CD4-positive, alpha-beta memory T cell (primary cell): ENCODE measurements at regions of chr1 and their contacts with region 1.

Region 1: GRCh38 chr1:113904674-113905434 is at the starts of genes AP4B1 and DCLRE1B:
- DNase-seq: peak; percentile 97 to 99 (median 98)
- H3K4me3 ChIP-seq: peak within 1 kb of the TSS; percentile 68 to 98
- H3K4me3 Mint-ChIP-seq: peak within 1 kb of the TSS; percentile 94 to 100 (median 99)
- H3K27ac ChIP-seq: peak within 1 kb of the TSS; percentile 96
- H3K27ac Mint-ChIP-seq: peak within 1 kb of the TSS; percentile 96 to 100 (median 100)
- H3K4me1 ChIP-seq: peaks cover 44% of the 10 kb centered on the region
- H3K4me1 Mint-ChIP-seq: peaks cover 36 to 74% (median 47%) of the 10 kb centered on the region in 4 donors
- H3K27me3 ChIP-seq: no peaks in the 10 kb centered on the region
- H3K27me3 Mint-ChIP-seq: no peaks in the 10 kb centered on the region
- total RNA-seq, gene AP4B1: 74.5 to 75.5 TPM
- total RNA-seq, gene DCLRE1B: 5.1 to 5.4 TPM

Region 2: DNA sequence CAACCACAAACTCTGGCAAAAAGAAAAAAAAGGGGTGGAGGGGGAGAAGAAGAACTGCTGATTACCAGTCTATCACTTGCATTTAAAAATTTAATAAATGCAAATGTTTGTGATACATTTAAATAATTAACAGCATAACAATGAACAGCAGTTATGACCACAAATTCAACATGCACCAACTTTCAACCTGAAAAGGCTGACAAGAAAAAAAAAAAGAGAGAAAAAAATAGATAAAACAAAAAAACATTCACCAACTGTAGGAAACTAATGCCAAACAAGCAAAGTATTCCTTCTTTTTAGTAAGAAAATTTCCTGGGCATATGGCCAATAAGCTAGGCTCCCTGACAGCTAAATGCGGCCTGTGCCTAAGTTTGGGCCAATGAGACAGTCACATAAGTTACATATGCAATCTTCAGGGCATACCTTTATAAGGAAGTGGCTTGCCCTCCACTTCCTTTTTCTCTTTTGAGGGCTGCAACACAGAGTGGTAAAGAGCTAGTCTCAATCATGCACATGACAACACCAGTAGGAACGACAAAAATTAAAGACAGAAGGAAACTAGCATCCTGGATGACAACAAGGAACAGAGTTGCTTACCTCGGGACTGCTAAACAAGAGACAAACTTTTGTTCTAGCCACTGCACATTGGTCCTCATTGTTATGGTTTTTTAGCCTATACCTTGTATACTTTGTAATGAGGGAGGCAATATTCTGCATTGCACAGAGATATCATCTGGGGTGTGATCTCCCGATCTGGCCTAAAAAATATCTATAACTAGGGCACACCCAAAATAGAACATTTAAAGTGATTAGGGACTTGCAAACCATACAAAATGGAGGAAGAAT is 121.4 kb before region 1 on chr1:
- CTCF ChIA-PET with region 1: interaction called, 3 read pairs
- POLR2A ChIA-PET with region 1: interaction called, 10 read pairs
- intact Hi-C with region 1: no loop called
- DNase-seq: peak; percentile 66 to 84 (median 73)
- H3K4me3 ChIP-seq: peak overlapping the region in 1 of 2 donors; percentile 14
- H3K4me3 Mint-ChIP-seq: peak overlapping the region in 7 of 8 donors; percentile 44 to 89 (median 72)
- H3K27ac ChIP-seq: peak overlapping the region; percentile 48
- H3K27ac Mint-ChIP-seq: peak overlapping the region in 2 of 7 donors; percentile 77 to 93
- H3K4me1 ChIP-seq: peaks cover 100% of the 10 kb centered on the region
- H3K4me1 Mint-ChIP-seq: peaks cover 30 to 47% (median 38%) of the 10 kb centered on the region in 4 donors
- H3K27me3 ChIP-seq: no peaks in the 10 kb centered on the region
- H3K27me3 Mint-ChIP-seq: no peaks in the 10 kb centered on the region

Region 3: DNA sequence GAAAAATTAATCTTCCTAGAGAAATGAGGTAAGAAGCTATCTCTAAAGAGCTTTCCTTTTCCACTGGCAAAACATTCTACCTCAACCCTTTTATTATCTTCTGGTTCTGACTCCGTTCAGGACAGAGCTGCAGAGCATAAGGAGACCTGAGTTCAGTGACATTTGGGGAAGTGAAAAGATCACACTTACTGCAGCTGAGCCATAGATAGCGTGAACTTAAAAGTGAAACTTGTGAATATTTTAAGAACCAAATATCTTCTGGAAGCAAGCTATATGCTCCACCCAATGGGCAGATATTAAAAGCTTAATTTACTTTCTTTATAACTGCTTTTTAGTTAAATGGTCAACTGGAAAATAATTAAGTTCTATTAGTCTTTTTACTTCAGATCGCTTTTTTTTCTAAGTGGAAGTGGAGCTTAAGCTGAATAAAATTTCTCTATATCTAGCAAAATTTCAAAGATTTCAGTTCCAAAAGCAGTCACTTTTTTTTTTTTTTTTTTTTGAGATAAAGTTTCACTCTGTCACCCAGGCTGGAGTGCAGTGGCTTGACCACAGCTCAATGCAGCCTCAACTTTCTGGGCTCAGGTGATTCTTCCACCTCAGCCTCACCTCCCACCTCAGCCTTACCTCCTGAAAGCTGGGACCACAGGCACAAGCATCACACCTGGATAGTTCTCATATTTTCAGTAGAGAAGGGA is 45.2 kb before region 1 on chr1:
- CTCF ChIA-PET with region 1: interaction called, 10 read pairs
- POLR2A ChIA-PET with region 1: interaction called, 16 read pairs
- intact Hi-C with region 1: no loop called
- DNase-seq: no peak
- H3K4me3 ChIP-seq: no peak overlapping the region
- H3K4me3 Mint-ChIP-seq: peak overlapping the region in 6 of 8 donors; percentile 25 to 66 (median 46)
- H3K27ac ChIP-seq: no peak overlapping the region
- H3K27ac Mint-ChIP-seq: peak overlapping the region in 6 of 7 donors; percentile 55 to 89 (median 86)
- H3K4me1 ChIP-seq: peaks cover 24% of the 10 kb centered on the region
- H3K4me1 Mint-ChIP-seq: peaks cover 23 to 39% (median 35%) of the 10 kb centered on the region in 4 donors
- H3K27me3 ChIP-seq: no peaks in the 10 kb centered on the region
- H3K27me3 Mint-ChIP-seq: no peaks in the 10 kb centered on the region

Region 4: DNA sequence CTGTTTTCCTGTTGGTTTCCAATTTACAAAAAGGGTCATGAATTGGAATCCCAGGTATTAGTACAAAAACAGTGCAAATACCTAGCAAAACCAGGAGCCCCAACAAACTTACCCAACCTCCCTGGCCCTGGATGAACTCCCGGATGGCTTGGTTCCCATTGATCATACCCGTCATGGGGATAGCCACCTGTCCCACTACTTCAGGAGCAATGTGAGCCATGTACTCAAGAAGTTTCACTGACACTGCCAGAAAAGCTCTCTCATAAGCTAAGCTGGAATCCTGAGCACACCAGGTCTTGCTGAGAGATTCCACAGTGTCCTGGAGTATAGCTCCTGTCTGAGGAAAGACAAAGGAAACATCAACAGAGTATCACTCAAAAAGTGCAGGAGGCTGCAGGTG is 23.2 kb before region 1 on chr1:
- CTCF ChIA-PET with region 1: interaction called, 18 read pairs
- POLR2A ChIA-PET with region 1: interaction called, 30 read pairs
- intact Hi-C with region 1: no loop called
- DNase-seq: no peak
- H3K4me3 ChIP-seq: no peak overlapping the region
- H3K4me3 Mint-ChIP-seq: no peak overlapping the region
- H3K27ac ChIP-seq: no peak overlapping the region
- H3K27ac Mint-ChIP-seq: peak overlapping the region in 5 of 7 donors; percentile 22 to 78 (median 66)
- H3K4me1 ChIP-seq: peaks cover 46% of the 10 kb centered on the region
- H3K4me1 Mint-ChIP-seq: peaks cover 36 to 55% (median 42%) of the 10 kb centered on the region in 4 donors
- H3K27me3 ChIP-seq: no peaks in the 10 kb centered on the region
- H3K27me3 Mint-ChIP-seq: no peaks in the 10 kb centered on the region

Region 5: GRCh38 chr1:113949007-113949406 is 44.2 kb after region 1 on chr1:
- CTCF ChIA-PET with region 1: interaction called, 10 read pairs
- POLR2A ChIA-PET with region 1: interaction called, 31 read pairs
- intact Hi-C with region 1: loop called (anchors 1 kb)
- DNase-seq: peak in 2 of 5 donors; percentile 27 to 41
- H3K4me3 ChIP-seq: no peak overlapping the region
- H3K4me3 Mint-ChIP-seq: peak overlapping the region in 4 of 8 donors; percentile 51 to 86 (median 72)
- H3K27ac ChIP-seq: peak overlapping the region; percentile 5
- H3K27ac Mint-ChIP-seq: peak overlapping the region; percentile 69 to 95 (median 91)
- H3K4me1 ChIP-seq: peaks cover 88% of the 10 kb centered on the region
- H3K4me1 Mint-ChIP-seq: peaks cover 47 to 93% (median 65%) of the 10 kb centered on the region in 4 donors
- H3K27me3 ChIP-seq: no peaks in the 10 kb centered on the region
- H3K27me3 Mint-ChIP-seq: no peaks in the 10 kb centered on the region